H1 (cell line): ENCODE measurements at regions of chr7 and their contacts with region 1.

Region 1: DNA sequence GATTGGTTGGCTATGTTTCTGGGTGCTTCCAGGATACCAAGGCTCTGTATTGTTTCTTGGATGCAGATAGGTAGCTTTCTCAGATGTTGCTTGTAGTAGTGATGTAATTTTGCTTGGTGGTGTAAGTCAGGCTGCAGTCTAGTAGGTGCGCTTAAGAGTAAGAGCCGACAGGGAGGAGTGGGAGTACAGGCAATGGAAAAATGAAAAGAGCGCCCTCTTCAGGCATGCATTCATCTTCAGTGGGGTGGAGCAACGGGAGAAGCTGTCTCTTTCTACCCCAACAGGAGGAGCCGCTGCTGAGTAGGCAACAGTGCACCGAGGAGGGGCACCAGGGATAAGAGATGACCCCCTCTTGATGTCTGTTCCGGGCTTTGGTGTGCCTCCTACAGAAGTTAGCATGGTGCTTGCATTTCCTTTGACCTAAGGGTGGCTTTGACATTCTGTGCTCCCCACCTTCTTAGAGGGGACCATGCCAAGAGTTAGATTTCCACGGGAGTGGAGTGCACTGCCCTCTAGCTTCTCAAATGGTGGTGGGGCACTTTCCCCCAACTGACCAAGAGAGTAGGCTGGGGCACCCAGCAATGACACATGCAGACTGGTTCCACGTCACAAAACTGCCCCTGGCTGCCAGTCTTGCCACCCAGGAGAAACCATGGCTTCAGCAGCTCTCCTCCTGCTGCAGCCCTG is 56.1 kb downstream of the ZNF783 start:
- DNase-seq: peak; percentile 38 to 81
- H3K4me3 ChIP-seq: no peak overlapping the region
- H3K27ac ChIP-seq: no peak overlapping the region
- H3K4me1 ChIP-seq: peaks cover 0 to 9% (median 3%) of the 10 kb centered on the region in 4 experiments; a peak in 4 of 7 replicates
- H3K27me3 ChIP-seq: no peaks in the 10 kb centered on the region
- CTCF ChIP-seq: peak; percentile 73 to 99 (median 96)
- EP300 ChIP-seq: no peak
- POLR2A ChIP-seq: no peak
- RAD21 ChIP-seq: peak; percentile 59 to 68

Region 2: DNA sequence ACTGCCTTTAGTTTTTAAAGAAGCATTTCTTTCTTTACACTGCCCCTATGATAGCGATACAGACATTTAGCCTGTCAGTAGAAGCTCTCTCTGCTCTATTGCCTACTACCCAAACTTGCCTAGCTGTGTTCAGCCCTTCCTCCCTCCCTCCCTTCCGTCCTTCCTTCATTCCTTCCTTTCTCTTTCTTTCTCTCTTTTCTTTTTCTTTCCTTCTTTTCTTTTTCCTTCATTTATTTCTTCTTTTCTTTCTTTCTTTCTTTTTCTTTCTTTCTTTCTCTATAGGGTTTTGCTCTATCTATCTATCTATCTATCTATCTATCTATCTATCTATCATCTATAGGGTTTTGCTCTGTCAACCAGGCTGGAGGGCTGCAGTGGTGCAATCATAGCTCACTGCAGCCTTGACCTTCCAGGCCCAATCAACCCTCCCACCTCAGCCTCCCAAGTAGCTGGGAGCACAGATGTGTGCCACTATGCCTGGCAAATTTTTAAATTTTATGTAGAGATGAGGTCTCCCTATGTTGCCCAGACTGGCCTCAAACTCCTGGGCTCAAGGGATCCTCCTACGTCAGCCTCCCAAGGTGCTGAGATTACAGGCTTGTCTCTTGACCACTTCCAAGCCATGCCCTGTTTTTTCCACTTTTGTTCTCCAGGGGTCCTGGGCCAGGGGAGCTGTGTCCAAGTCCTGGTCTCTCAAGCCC is 85.6 kb before region 1 on chr7:
- CTCF ChIA-PET with region 1: no interaction called
- POLR2A ChIA-PET with region 1: no interaction called
- DNase-seq: no peak
- H3K4me3 ChIP-seq: no peak overlapping the region
- H3K27ac ChIP-seq: no peak overlapping the region
- H3K4me1 ChIP-seq: no peaks in the 10 kb centered on the region
- H3K27me3 ChIP-seq: peaks cover 0 to 1% (median 0%) of the 10 kb centered on the region in 4 experiments; a peak in 1 of 7 replicates
- CTCF ChIP-seq: no peak
- EP300 ChIP-seq: no peak
- POLR2A ChIP-seq: no peak
- RAD21 ChIP-seq: no peak

Region 3: GRCh38 chr7:149284850-149285626 is 33.1 kb before region 1 on chr7:
- CTCF ChIA-PET with region 1: interaction called, 10 read pairs
- POLR2A ChIA-PET with region 1: interaction called, 4 read pairs
- DNase-seq: peak; percentile 73 to 100
- H3K4me3 ChIP-seq: peak overlapping the region; percentile 73 to 79 (median 74)
- H3K27ac ChIP-seq: no peak overlapping the region
- H3K4me1 ChIP-seq: peaks cover 0 to 6% (median 4%) of the 10 kb centered on the region in 4 experiments; a peak in 5 of 7 replicates
- H3K27me3 ChIP-seq: peaks cover 0 to 8% (median 4%) of the 10 kb centered on the region in 4 experiments; a peak in 3 of 7 replicates
- CTCF ChIP-seq: peak; percentile 15 to 37 (median 36); a peak in 2 of 4 replicates
- EP300 ChIP-seq: no peak
- POLR2A ChIP-seq: peak in 1 of 2 experiments; percentile 61; a peak in 1 of 3 replicates
- RAD21 ChIP-seq: peak; percentile 23 to 44; a peak in 3 of 4 replicates

Region 4: DNA sequence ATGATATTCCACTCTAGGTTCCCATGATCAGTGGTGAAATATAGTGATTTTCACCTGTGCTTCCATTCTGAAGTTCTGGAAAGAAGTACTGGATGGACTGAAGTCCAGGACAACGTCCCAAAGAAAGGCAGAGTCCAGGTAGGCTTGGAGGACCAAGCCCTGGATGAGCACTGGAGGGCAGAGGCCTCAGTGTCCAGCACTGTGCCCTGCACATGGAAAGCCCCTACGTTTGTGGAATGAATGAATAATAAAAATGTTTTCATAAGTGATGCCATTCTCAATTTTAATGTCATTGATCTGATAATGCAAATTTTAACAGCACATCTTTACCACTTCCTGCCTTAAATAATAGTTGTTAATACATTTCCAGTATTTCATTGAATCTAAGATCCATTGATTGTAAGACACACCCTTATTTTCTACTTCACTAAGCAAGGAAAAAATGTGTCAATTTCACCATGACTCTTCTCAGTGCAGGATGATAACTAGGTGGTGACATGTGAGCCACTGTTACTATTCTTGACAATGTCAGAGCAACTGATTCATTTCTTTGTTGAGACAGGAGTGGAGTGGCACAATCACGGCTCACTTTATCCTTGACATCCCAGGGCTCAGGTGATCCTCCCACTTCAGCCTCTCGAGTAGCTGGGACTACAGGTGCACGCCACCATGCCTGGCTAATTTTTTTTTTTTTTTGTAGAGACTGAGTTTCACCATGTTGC is 20.9 kb before region 1 on chr7:
- CTCF ChIA-PET with region 1: interaction called, 13 read pairs
- POLR2A ChIA-PET with region 1: no interaction called
- DNase-seq: peak in 1 of 2 experiments; percentile 8
- H3K4me3 ChIP-seq: no peak overlapping the region
- H3K27ac ChIP-seq: no peak overlapping the region
- H3K4me1 ChIP-seq: 0 out of 7 replicates have a peak, but pooled peaks cover 0 to 5% (median 0%) of the 10 kb centered on the region in 4 experiments
- H3K27me3 ChIP-seq: no peaks in the 10 kb centered on the region
- CTCF ChIP-seq: no peak
- EP300 ChIP-seq: no peak
- POLR2A ChIP-seq: no peak
- RAD21 ChIP-seq: no peak

Region 5: GRCh38 chr7:149348758-149349369 is 30.7 kb after region 1 on chr7:
- CTCF ChIA-PET with region 1: interaction called, 11 read pairs
- POLR2A ChIA-PET with region 1: no interaction called
- DNase-seq: no peak
- H3K4me3 ChIP-seq: no peak overlapping the region
- H3K27ac ChIP-seq: no peak overlapping the region
- H3K4me1 ChIP-seq: no peaks in the 10 kb centered on the region
- H3K27me3 ChIP-seq: no peaks in the 10 kb centered on the region
- CTCF ChIP-seq: no peak
- EP300 ChIP-seq: no peak
- POLR2A ChIP-seq: no peak
- RAD21 ChIP-seq: no peak

Region 6: GRCh38 chr7:149362696-149363095 is 44.6 kb after region 1 on chr7:
- CTCF ChIA-PET with region 1: interaction called, 21 read pairs
- POLR2A ChIA-PET with region 1: no interaction called
- DNase-seq: no peak
- H3K4me3 ChIP-seq: no peak overlapping the region
- H3K27ac ChIP-seq: no peak overlapping the region
- H3K4me1 ChIP-seq: no peaks in the 10 kb centered on the region; a peak in 1 of 7 replicates
- H3K27me3 ChIP-seq: no peaks in the 10 kb centered on the region
- CTCF ChIP-seq: no peak
- EP300 ChIP-seq: no peak
- POLR2A ChIP-seq: no peak
- RAD21 ChIP-seq: no peak

Region 7: GRCh38 chr7:149404825-149405224 is 86.7 kb after region 1 on chr7:
- CTCF ChIA-PET with region 1: interaction called, 16 read pairs
- POLR2A ChIA-PET with region 1: no interaction called
- DNase-seq: no peak
- H3K4me3 ChIP-seq: no peak overlapping the region
- H3K27ac ChIP-seq: no peak overlapping the region
- H3K4me1 ChIP-seq: peaks cover 0 to 2% (median 0%) of the 10 kb centered on the region in 4 experiments; a peak in 3 of 7 replicates
- H3K27me3 ChIP-seq: no peaks in the 10 kb centered on the region; a peak in 1 of 7 replicates
- CTCF ChIP-seq: no peak
- EP300 ChIP-seq: no peak
- POLR2A ChIP-seq: no peak
- RAD21 ChIP-seq: no peak